ENCODE measurements at regions of chr2 and their contacts with region 1.

Region 1: DNA sequence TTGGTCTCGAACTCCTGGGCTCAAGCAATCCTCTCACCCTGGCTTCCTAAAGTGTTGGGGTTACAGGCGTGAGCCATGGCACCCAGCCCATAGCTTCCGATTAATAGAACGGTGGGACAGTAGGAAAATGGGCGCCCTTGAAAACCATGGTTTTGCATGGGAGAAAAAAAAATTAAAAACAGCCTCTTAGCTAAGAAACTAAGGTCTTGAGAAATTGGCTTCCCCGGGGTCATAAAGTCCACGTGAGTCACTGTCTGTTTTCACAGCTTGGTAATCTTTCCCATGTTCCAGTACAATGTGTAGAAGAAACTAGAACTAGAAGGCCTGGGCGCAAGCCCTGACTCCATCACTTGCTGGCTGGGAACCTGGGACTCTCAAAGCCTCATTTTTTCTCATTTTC is 20.7 kb downstream of the B3GNT2 start:
- DNase-seq: peak in 1 of 2 experiments; percentile 51
- H3K4me3 ChIP-seq: no peak overlapping the region
- H3K27ac ChIP-seq: no peak overlapping the region
- H3K4me1 ChIP-seq: peaks cover 4% of the 10 kb centered on the region; the same call in 1 of the 2 replicates
- H3K27me3 ChIP-seq: no peaks in the 10 kb centered on the region
- CTCF ChIP-seq: no peak

Region 2: DNA sequence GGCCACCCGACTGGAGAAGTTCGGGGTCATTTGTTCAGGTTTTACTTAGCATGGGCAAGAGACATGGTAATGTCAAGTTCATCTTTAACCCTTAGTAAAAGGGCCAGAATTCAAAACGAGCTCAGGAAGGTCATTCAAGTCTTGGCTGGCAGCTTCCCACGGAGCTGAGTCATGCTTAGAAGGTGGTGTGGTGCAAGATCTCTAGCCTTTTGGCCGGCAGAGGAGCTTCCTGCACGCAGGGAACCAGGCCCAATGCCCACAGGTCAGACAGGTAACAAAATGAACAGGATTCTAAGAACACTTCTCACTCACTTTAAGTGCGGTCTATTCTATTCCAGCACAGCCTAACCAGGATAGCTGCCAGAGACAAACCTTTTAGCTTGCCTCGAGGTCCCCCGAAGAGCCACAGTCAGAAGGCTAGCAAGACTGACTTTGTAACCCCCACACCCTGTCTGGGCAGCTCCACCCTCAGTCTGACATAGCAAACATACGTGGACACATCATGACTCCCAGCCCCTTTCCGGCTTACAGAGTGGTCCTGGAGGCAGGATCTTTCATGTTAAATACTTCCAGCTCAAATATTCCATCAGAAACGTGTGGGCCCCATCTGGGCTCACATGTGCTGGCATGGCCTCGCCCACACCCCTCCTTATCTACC is 1955.8 kb before region 1 on chr2:
- CTCF ChIA-PET with region 1: no interaction called
- POLR2A ChIA-PET with region 1: no interaction called
- intact Hi-C with region 1: no loop called
- DNase-seq: peak in 1 of 2 experiments; percentile 21
- H3K4me3 ChIP-seq: no peak overlapping the region
- H3K27ac ChIP-seq: no peak overlapping the region
- H3K4me1 ChIP-seq: no peaks in the 10 kb centered on the region
- H3K27me3 ChIP-seq: 0 out of 2 replicates have a peak, but pooled peaks cover 3% of the 10 kb centered on the region
- CTCF ChIP-seq: no peak

Region 3: GRCh38 chr2:63287956-63288355 is 1071.3 kb after region 1 on chr2:
- CTCF ChIA-PET with region 1: no interaction called
- POLR2A ChIA-PET with region 1: interaction called, 10 read pairs
- intact Hi-C with region 1: no loop called
- DNase-seq: no peak
- H3K4me3 ChIP-seq: no peak overlapping the region
- H3K27ac ChIP-seq: no peak overlapping the region
- H3K4me1 ChIP-seq: no peaks in the 10 kb centered on the region
- H3K27me3 ChIP-seq: no peaks in the 10 kb centered on the region
- CTCF ChIP-seq: no peak